ENCODE measurements at regions of chr6 and their contacts with region 1.

Region 1: GRCh38 chr6:164927288-164928056 is 381.9 kb downstream of the C6orf118 start:
- DNase-seq: peak; percentile 75
- H3K4me3 ChIP-seq: peak overlapping the region; percentile 25 to 28; a peak in 2 of 4 replicates
- H3K27ac ChIP-seq: no peak overlapping the region
- H3K4me1 ChIP-seq: peaks cover 0 to 12% of the 10 kb centered on the region in 2 experiments; a peak in 2 of 4 replicates
- H3K27me3 ChIP-seq: no peaks in the 10 kb centered on the region
- CTCF ChIP-seq: peak; percentile 82
- EP300 ChIP-seq: no peak
- RAD21 ChIP-seq: peak; percentile 93

Region 2: GRCh38 chr6:163427498-163428254 is 1499.8 kb before region 1 on chr6:
- CTCF ChIA-PET with region 1: interaction called, 14 read pairs
- POLR2A ChIA-PET with region 1: no interaction called
- DNase-seq: no peak
- H3K4me3 ChIP-seq: no peak overlapping the region
- H3K27ac ChIP-seq: no peak overlapping the region
- H3K4me1 ChIP-seq: peaks cover 4 to 40% of the 10 kb centered on the region in 2 experiments; a peak in 3 of 4 replicates
- H3K27me3 ChIP-seq: no peaks in the 10 kb centered on the region
- CTCF ChIP-seq: peak; percentile 61
- EP300 ChIP-seq: no peak
- RAD21 ChIP-seq: peak; percentile 82

Region 3: DNA sequence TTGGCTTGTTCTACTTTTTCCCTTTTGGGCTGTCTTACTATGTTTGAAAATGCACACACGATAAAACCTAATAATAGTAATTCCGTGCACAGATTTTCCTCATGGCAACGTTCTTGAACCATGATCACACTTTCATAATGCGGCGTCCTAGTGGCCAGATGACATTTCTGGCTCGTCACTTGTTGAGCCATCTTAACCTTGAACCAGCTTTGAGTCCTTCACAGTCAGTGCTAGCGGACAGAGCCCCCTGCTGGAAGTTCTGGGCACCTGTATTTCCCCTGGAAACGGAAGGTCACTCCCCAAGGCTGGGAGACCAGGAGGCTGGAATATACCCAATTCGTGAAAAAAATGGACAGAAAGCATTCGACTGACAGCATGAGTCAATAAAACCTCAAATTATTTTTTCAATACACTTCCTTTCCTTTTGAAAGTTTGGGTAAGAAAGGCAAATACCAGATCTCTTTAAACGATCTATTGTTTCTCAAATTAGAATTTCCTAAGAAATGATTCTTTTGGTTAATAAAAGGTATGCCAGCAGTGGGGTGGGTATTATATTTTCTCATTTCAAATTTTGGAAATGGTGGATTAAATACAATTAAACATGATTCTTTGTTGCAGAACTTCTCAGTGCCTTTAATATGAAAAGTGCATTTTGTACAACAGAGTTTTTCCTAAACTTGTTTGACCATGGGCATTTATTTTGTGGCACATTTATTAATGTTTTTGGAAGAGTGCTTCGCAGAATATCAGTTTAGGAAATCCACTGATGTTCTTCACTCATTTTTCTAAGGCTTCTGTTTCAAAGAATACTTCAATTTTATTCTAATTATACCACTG is 970.7 kb before region 1 on chr6:
- CTCF ChIA-PET with region 1: interaction called, 11 read pairs
- POLR2A ChIA-PET with region 1: no interaction called
- DNase-seq: peak; percentile 80
- H3K4me3 ChIP-seq: no peak overlapping the region; a peak in 1 of 4 replicates
- H3K27ac ChIP-seq: no peak overlapping the region
- H3K4me1 ChIP-seq: no peaks in the 10 kb centered on the region
- H3K27me3 ChIP-seq: no peaks in the 10 kb centered on the region
- CTCF ChIP-seq: peak; percentile 73
- EP300 ChIP-seq: no peak
- RAD21 ChIP-seq: peak; percentile 89

Region 4: GRCh38 chr6:164845773-164846172 is 81.7 kb before region 1 on chr6:
- CTCF ChIA-PET with region 1: no interaction called
- POLR2A ChIA-PET with region 1: no interaction called
- DNase-seq: no peak
- H3K4me3 ChIP-seq: no peak overlapping the region
- H3K27ac ChIP-seq: no peak overlapping the region
- H3K4me1 ChIP-seq: no peaks in the 10 kb centered on the region
- H3K27me3 ChIP-seq: no peaks in the 10 kb centered on the region
- CTCF ChIP-seq: no peak
- EP300 ChIP-seq: no peak
- RAD21 ChIP-seq: no peak

Region 5: GRCh38 chr6:165630544-165630953 is 703.1 kb after region 1 on chr6:
- CTCF ChIA-PET with region 1: no interaction called
- POLR2A ChIA-PET with region 1: no interaction called
- DNase-seq: no peak
- H3K4me3 ChIP-seq: no peak overlapping the region
- H3K27ac ChIP-seq: no peak overlapping the region
- H3K4me1 ChIP-seq: no peaks in the 10 kb centered on the region; a peak in 1 of 4 replicates
- H3K27me3 ChIP-seq: no peaks in the 10 kb centered on the region
- CTCF ChIP-seq: no peak
- EP300 ChIP-seq: no peak
- RAD21 ChIP-seq: no peak